A673 (cell line): ENCODE measurements at regions of chr4 and their contacts with region 1.

Region 1: GRCh38 chr4:111977419-111977965 is 167.8 kb upstream of the FAM241A start:
- DNase-seq: no peak
- H3K4me3 ChIP-seq: no peak overlapping the region
- H3K27ac ChIP-seq: no peak overlapping the region
- H3K4me1 ChIP-seq: no peaks in the 10 kb centered on the region
- H3K27me3 ChIP-seq: peaks cover 3% of the 10 kb centered on the region
- CTCF ChIP-seq: no peak

Region 2: GRCh38 chr4:110247591-110247990 is 1729.9 kb before region 1 on chr4:
- CTCF ChIA-PET with region 1: no interaction called
- POLR2A ChIA-PET with region 1: interaction called, 13 read pairs
- intact Hi-C with region 1: no loop called
- DNase-seq: no peak
- H3K4me3 ChIP-seq: no peak overlapping the region
- H3K27ac ChIP-seq: no peak overlapping the region
- H3K4me1 ChIP-seq: peaks cover 8% of the 10 kb centered on the region
- H3K27me3 ChIP-seq: no peaks in the 10 kb centered on the region
- CTCF ChIP-seq: no peak

Region 3: GRCh38 chr4:112726031-112726430 is 748.5 kb after region 1 on chr4:
- CTCF ChIA-PET with region 1: no interaction called
- POLR2A ChIA-PET with region 1: no interaction called
- intact Hi-C with region 1: no loop called
- DNase-seq: no peak
- H3K4me3 ChIP-seq: no peak overlapping the region
- H3K27ac ChIP-seq: no peak overlapping the region
- H3K4me1 ChIP-seq: no peaks in the 10 kb centered on the region
- H3K27me3 ChIP-seq: no peaks in the 10 kb centered on the region
- CTCF ChIP-seq: no peak